CD4-positive, alpha-beta memory T cell (primary cell): ENCODE measurements at regions of chr14 and their contacts with region 1.

Region 1: GRCh38 chr14:49620182-49621113 is at the starts of genes MGAT2 and RPL36AL:
- DNase-seq: peak; percentile 95 to 97 (median 96)
- H3K4me3 ChIP-seq: peak within 1 kb of the TSS; percentile 99 to 100
- H3K4me3 Mint-ChIP-seq: peak within 1 kb of the TSS; percentile 95 to 99 (median 96)
- H3K27ac ChIP-seq: peak within 1 kb of the TSS; percentile 98
- H3K27ac Mint-ChIP-seq: peak within 1 kb of the TSS; percentile 98 to 100 (median 99)
- H3K4me1 ChIP-seq: peaks cover 65% of the 10 kb centered on the region
- H3K4me1 Mint-ChIP-seq: peaks cover 34 to 69% (median 43%) of the 10 kb centered on the region in 4 donors
- H3K27me3 ChIP-seq: no peaks in the 10 kb centered on the region
- H3K27me3 Mint-ChIP-seq: no peaks in the 10 kb centered on the region
- total RNA-seq, gene MGAT2: 58.5 to 58.7 TPM
- total RNA-seq, gene RPL36AL: 416 to 441 TPM

Region 2: DNA sequence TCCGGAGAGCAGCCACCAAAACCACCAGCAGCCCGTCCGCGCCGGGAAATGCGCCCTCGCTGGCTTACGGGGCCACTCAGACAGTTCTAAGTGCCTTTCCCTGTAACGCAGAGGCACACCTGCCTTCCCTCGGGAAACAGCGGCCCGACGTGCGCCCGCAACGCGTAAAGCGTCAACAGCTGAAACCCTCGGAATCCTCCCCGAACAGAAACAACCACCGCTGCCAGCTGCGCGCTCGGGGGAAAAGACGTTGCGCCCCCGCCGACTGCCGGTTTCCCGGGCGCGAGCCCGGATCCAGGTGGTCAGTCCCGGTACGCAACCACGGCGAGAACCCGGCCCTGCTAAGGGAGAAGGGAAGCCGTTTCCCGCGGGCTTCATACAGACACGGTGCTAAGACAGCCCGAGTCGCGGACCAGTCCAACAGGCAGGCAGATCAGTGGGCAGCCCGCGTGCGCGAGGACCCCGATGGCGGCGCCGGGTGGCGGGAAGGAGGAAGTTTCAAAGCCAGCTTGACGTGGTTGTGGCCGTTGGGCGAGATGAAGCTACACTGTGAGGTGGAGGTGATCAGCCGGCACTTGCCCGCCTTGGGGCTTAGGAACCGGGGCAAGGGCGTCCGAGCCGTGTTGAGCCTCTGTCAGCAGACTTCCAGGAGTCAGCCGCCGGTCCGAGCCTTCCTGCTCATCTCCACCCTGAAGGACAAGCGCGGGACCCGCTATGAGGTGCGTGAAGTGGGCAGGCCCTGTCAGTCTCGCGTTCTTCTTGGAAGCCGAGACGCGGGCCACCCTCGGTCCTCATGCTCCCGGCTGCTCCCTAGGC is 21.8 kb before region 1 on chr14 and contains the start of gene LRR1:
- CTCF ChIA-PET with region 1: interaction called, 19 read pairs
- POLR2A ChIA-PET with region 1: interaction called, 131 read pairs
- intact Hi-C with region 1: loop called (anchors 1 kb)
- DNase-seq: peak; percentile 84 to 93 (median 87)
- H3K4me3 ChIP-seq: peak within 1 kb of the TSS; percentile 70 to 97
- H3K4me3 Mint-ChIP-seq: peak within 1 kb of the TSS; percentile 92 to 100 (median 98)
- H3K27ac ChIP-seq: peak within 1 kb of the TSS; percentile 90
- H3K27ac Mint-ChIP-seq: peak within 1 kb of the TSS; percentile 93 to 99 (median 98)
- H3K4me1 ChIP-seq: peaks cover 9% of the 10 kb centered on the region
- H3K4me1 Mint-ChIP-seq: peaks cover 9 to 38% (median 25%) of the 10 kb centered on the region in 4 donors
- H3K27me3 ChIP-seq: no peaks in the 10 kb centered on the region
- H3K27me3 Mint-ChIP-seq: no peaks in the 10 kb centered on the region
- total RNA-seq, gene LRR1: 13.6 to 16.1 TPM

Region 3: DNA sequence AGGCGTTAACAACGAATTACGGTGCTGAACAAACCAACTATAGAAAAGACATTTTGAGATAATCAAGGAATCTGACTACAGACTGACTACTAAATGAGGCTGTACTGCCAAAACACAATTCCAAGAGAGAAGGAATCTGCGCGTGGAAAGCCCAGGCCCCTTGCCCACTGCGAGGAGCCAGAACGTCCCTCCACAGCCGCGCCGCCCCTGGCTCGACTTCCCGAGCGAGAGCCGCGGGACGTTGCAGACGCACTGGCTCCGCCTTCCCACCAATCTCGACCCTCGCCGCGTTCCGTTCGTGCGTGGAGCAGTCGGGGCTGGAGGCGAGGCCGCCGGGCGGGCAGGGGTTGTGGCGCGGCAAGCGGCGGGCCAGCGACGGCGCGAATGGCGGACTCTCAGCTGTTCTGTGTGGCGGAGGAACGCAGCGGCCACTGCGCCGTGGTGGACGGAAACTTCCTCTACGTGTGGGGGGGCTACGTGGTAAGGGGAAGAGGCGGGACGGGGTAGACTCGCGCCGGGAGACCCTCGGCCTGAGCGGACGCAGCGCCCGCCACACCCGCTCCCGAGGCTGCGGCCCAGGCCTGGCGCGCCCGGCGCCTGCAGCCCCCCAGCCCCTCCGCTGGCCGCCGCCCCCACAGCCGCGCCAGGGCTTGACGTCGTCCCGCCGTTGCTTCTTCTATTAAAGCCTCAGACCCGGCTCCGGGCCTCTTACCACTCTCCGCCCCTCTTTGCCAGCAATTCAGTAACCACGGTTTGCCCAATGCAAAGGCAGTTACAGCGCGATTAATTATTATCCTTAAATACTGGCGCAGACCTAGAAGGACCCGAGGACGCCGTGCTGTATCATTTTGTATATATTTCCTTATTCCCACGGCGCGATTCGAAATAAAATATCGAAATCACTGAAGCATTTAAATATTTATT is 72.6 kb after region 1 on chr14 and contains the start of gene KLHDC1:
- CTCF ChIA-PET with region 1: interaction called, 7 read pairs
- POLR2A ChIA-PET with region 1: interaction called, 21 read pairs
- intact Hi-C with region 1: no loop called
- DNase-seq: peak; percentile 77 to 83 (median 79)
- H3K4me3 ChIP-seq: peak within 1 kb of the TSS; percentile 49 to 72
- H3K4me3 Mint-ChIP-seq: peak within 1 kb of the TSS; percentile 87 to 99 (median 90)
- H3K27ac ChIP-seq: peak within 1 kb of the TSS; percentile 64
- H3K27ac Mint-ChIP-seq: peak within 1 kb of the TSS; percentile 77 to 96 (median 93)
- H3K4me1 ChIP-seq: peaks cover 23% of the 10 kb centered on the region
- H3K4me1 Mint-ChIP-seq: peaks cover 23 to 38% (median 25%) of the 10 kb centered on the region in 4 donors
- H3K27me3 ChIP-seq: no peaks in the 10 kb centered on the region
- H3K27me3 Mint-ChIP-seq: no peaks in the 10 kb centered on the region
- total RNA-seq, gene KLHDC1: 12.9 to 13.6 TPM

Region 4: GRCh38 chr14:50116181-50116956 is 495.9 kb after region 1 on chr14 and contains the start of gene VCPKMT:
- CTCF ChIA-PET with region 1: no interaction called
- POLR2A ChIA-PET with region 1: interaction called, 13 read pairs
- intact Hi-C with region 1: loop called (anchors 1 kb)
- DNase-seq: peak; percentile 93 to 96 (median 95)
- H3K4me3 ChIP-seq: peak within 1 kb of the TSS; percentile 65 to 69
- H3K4me3 Mint-ChIP-seq: peak within 1 kb of the TSS; percentile 97 to 98 (median 98)
- H3K27ac ChIP-seq: peak within 1 kb of the TSS; percentile 93
- H3K27ac Mint-ChIP-seq: peak within 1 kb of the TSS; percentile 96 to 100 (median 99)
- H3K4me1 ChIP-seq: peaks cover 34% of the 10 kb centered on the region
- H3K4me1 Mint-ChIP-seq: peaks cover 10 to 32% (median 23%) of the 10 kb centered on the region in 4 donors
- H3K27me3 ChIP-seq: no peaks in the 10 kb centered on the region
- H3K27me3 Mint-ChIP-seq: no peaks in the 10 kb centered on the region
- total RNA-seq, gene VCPKMT: 17.3 to 20.1 TPM